Sigmoid colon (tissue), 7 donors: ENCODE measurements at regions of chr1 and their contacts with region 1.

Region 1: GRCh38 chr1:59013276-59013927 is 229.6 kb upstream of the JUN start:
- DNase-seq: peak; percentile 85
- H3K4me3 ChIP-seq: peak overlapping the region in 3 of 4 donors; percentile 2 to 26 (median 15)
- H3K27ac ChIP-seq: peak overlapping the region; percentile 72 to 95 (median 89)
- H3K4me1 ChIP-seq: peaks cover 0 to 49% (median 35%) of the 10 kb centered on the region in 4 donors
- H3K27me3 ChIP-seq: no peaks in the 10 kb centered on the region
- CTCF ChIP-seq: no peak
- EP300 ChIP-seq: peak in 3 of 4 donors; percentile 12 to 67 (median 30)
- POLR2A ChIP-seq: no peak

Region 2: DNA sequence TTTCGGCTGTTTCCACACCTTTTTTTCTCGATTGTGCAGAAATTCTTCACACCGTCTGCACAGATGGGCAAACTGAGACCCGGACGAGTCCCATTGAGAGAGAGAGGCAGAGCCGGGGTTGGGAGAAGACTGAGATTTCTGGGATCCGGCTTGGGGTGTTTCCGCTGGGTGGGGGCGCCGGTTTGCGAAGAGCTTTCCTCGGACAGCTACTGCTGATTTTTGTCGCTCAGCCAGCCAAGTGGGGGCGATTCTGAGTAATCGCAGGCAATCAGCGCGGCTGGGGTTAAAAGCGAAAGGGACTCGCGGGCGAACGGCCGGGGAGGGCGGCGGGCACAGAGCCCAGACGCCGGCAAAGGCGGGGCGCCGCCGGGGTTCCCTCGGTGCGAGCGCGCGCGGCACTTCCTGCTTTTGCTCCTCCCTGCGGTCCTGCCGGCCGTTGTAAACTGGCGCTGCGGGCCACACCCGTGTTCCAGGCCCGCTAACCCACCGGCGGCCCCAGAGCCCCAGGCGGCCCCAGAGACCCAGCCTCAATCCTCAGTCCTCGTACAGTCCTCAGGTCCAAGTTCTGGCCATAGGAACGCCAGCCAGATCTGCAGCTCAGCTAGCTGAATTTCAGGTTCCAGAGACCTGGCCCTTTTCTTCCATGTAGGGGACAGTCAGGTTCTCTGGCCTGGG is 197.2 kb before region 1 on chr1:
- intact Hi-C with region 1: loop called (anchors 10 kb)
- DNase-seq: peak; percentile 96
- H3K4me3 ChIP-seq: peak overlapping the region; percentile 42 to 66 (median 56)
- H3K27ac ChIP-seq: peak overlapping the region; percentile 84 to 94 (median 90)
- H3K4me1 ChIP-seq: peaks cover 0 to 24% (median 15%) of the 10 kb centered on the region in 4 donors
- H3K27me3 ChIP-seq: no peaks in the 10 kb centered on the region
- CTCF ChIP-seq: no peak
- EP300 ChIP-seq: no peak
- POLR2A ChIP-seq: peak; percentile 56 to 64

Region 3: GRCh38 chr1:59061876-59062275 is 48.5 kb after region 1 on chr1:
- intact Hi-C with region 1: no loop called
- DNase-seq: peak; percentile 90
- H3K4me3 ChIP-seq: peak overlapping the region in 3 of 4 donors; percentile 4 to 15 (median 14)
- H3K27ac ChIP-seq: peak overlapping the region; percentile 48 to 70 (median 60)
- H3K4me1 ChIP-seq: peaks cover 0 to 29% (median 15%) of the 10 kb centered on the region in 4 donors
- H3K27me3 ChIP-seq: no peaks in the 10 kb centered on the region
- CTCF ChIP-seq: no peak
- EP300 ChIP-seq: no peak
- POLR2A ChIP-seq: peak in 1 of 2 donors; percentile 51

Region 4: DNA sequence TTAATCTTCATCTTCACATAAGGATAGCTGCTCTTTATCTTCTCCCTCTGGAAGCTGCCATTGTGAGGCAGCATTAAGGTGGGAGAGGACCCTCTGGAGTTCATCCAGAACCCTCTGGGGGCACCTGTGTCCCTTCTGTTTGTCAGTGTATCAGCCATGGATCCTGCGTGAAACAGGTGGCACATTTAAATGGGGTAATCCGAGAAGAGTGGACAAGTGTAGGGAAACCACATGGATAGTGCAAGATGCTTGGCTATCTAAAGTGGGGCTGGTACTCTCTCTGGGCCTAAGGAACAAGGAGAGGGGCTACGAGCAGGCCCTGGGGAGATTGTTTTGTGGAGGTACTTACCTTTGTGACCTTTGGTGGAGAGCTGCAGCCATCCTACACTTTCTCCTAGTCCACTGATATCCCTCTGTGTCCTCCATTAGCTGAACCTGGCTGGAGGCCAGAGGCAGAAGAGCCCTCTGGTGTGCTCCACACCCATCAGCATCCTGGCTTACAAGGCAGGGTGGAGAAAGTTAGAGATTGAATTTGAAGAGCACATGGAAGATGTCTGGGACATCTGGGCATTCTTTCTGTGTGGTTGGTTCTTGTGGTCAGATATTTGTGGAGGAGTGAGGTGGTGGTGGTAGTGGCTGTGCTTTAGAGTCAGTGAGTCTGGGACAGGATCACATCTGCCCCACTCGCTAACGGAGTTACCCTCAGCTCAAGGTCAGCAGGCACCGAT is 401.2 kb after region 1 on chr1:
- intact Hi-C with region 1: no loop called
- DNase-seq: no peak
- H3K4me3 ChIP-seq: no peak overlapping the region
- H3K27ac ChIP-seq: no peak overlapping the region
- H3K4me1 ChIP-seq: peaks cover 0 to 14% (median 11%) of the 10 kb centered on the region in 4 donors
- H3K27me3 ChIP-seq: no peaks in the 10 kb centered on the region
- CTCF ChIP-seq: no peak
- EP300 ChIP-seq: no peak
- POLR2A ChIP-seq: no peak

Region 5: GRCh38 chr1:59549903-59550302 is 536.5 kb after region 1 on chr1:
- intact Hi-C with region 1: no loop called
- DNase-seq: peak; percentile 71
- H3K4me3 ChIP-seq: no peak overlapping the region
- H3K27ac ChIP-seq: peak overlapping the region in 3 of 4 donors; percentile 17 to 24 (median 19)
- H3K4me1 ChIP-seq: peaks cover 0 to 27% (median 14%) of the 10 kb centered on the region in 4 donors
- H3K27me3 ChIP-seq: no peaks in the 10 kb centered on the region
- CTCF ChIP-seq: no peak
- EP300 ChIP-seq: peak in 1 of 4 donors; percentile 11
- POLR2A ChIP-seq: no peak